BJ (cell line): ENCODE measurements at regions of chr9 and their contacts with region 1.

Region 1: DNA sequence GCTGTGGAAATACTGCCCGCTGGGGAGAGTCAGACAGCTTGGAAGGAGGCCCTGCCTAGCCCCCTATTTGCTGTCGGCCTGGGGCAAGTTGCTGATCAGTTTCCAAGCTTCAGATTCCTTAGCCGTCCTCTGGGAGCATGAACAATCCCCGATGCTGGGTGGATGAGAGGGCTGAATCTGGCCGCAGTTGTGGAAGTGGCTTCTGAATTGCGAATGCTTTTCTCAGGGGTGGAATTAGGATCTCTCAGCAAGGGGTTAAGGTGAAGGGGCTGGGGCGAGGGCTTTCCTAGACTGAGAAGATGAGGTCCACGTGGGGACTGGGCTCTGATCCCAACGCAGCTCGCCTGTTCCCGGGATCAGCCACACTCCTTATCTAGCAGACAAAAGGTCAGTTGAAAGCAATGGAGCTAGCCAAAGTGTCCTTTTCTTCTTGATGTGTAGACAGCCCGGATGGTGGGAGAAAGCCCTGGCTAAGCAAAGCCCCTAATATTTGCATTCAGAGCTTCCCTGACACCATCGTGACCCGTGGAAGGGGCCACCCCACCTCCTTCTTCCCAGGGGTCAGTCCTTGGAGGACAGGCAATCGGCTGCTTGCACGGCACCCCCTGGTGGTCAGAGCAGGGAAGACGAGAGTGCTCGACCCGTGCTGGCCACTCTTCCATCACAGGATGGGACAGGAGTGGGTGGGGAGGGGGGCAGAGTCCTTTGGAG is 54.9 kb downstream of the COL15A1 start:
- DNase-seq: no peak
- H3K4me3 ChIP-seq: no peak overlapping the region
- H3K27me3 ChIP-seq: peaks cover 1% of the 10 kb centered on the region; the same call in 1 of the 2 replicates
- CTCF ChIP-seq: peak; percentile 93

Region 2: GRCh38 chr9:98860871-98861293 is 137.7 kb before region 1 on chr9:
- CTCF ChIA-PET with region 1: interaction called, 84 read pairs
- POLR2A ChIA-PET with region 1: no interaction called
- DNase-seq: peak; percentile 97
- H3K4me3 ChIP-seq: no peak overlapping the region
- H3K27me3 ChIP-seq: no peaks in the 10 kb centered on the region; the same call in 1 of the 2 replicates
- CTCF ChIP-seq: peak; percentile 53

Region 3: DNA sequence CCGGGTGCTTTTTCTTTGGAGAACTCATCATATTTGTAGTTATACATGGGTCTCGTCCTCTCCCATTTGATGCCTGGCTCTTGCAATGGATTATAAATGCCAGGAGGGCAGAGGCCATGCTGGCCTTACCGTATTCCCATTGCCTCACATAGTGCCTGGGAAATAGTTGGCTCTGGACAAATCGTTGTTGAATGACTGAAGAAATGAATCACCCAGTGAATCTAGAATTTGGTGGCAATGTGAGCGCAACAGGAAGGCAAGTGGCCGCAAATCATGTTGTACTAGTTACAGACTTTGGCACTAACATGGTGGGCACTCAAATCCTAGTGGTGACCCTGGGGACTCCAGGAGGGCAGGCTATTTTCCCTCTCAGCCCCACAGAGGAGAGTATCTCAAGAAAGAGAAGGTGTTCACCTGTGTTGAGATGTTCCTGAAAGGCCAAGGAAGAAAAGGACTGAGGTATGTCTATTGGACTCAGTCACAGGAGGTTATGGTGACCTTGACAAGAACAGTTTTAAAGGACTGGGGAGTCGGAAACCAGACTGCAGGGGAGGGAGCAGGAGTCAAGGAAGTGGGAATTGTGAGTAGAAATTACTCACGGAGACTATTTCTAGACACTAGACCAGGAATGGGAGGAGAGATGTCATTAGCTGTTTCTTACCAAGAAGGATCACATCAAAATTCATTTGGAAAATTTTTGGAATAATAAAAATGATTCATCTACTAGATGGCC is 116.6 kb before region 1 on chr9:
- CTCF ChIA-PET with region 1: no interaction called
- POLR2A ChIA-PET with region 1: no interaction called
- DNase-seq: no peak
- H3K4me3 ChIP-seq: no peak overlapping the region
- H3K27me3 ChIP-seq: peaks cover 4% of the 10 kb centered on the region
- CTCF ChIP-seq: no peak

Region 4: GRCh38 chr9:98958271-98958984 is 40.2 kb before region 1 on chr9:
- CTCF ChIA-PET with region 1: interaction called, 15 read pairs
- POLR2A ChIA-PET with region 1: no interaction called
- DNase-seq: peak; percentile 99
- H3K4me3 ChIP-seq: no peak overlapping the region
- H3K27me3 ChIP-seq: no peaks in the 10 kb centered on the region
- CTCF ChIP-seq: 0 out of 2 replicates have a peak, but pooled peaks have one; percentile 4

Region 5: GRCh38 chr9:99012942-99013512 is 14.4 kb after region 1 on chr9:
- CTCF ChIA-PET with region 1: interaction called, 16 read pairs
- POLR2A ChIA-PET with region 1: interaction called, 5 read pairs
- DNase-seq: no peak
- H3K4me3 ChIP-seq: no peak overlapping the region
- H3K27me3 ChIP-seq: no peaks in the 10 kb centered on the region
- CTCF ChIP-seq: no peak

Region 6: DNA sequence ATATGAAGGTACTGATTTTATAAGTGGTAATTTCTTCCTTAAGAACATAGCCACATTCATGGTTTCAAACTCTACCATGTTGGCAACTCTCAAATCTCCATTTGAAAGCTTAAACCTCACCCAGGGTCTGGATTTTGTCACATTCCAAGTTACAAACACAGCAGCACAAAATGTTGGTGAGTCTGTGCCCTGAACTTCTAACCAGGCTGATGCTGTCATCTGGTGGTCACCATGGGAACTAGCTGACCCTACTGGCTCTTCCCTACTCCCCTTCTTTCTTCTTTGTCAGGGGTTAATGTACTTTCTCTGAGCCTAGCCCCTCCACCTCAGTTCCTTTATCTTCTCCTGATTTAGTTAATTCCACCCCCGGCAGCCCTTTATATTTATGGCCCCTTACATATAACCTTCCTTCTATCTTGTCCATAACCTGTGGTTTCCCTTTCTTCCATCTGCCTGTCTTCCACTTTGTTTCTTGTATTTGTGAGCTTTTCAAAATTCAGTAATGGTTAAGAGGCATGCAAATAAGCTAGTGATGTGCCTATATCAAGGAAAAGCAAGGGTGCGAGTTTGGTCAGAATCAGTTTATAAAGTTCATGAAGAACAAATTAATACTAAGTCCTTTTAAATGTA is 142.2 kb after region 1 on chr9:
- CTCF ChIA-PET with region 1: interaction called, 78 read pairs
- POLR2A ChIA-PET with region 1: no interaction called
- DNase-seq: no peak
- H3K4me3 ChIP-seq: no peak overlapping the region
- H3K27me3 ChIP-seq: no peaks in the 10 kb centered on the region
- CTCF ChIP-seq: peak; percentile 89